ENCODE measurements at regions of chr20 and their contacts with region 1.

Region 1: DNA sequence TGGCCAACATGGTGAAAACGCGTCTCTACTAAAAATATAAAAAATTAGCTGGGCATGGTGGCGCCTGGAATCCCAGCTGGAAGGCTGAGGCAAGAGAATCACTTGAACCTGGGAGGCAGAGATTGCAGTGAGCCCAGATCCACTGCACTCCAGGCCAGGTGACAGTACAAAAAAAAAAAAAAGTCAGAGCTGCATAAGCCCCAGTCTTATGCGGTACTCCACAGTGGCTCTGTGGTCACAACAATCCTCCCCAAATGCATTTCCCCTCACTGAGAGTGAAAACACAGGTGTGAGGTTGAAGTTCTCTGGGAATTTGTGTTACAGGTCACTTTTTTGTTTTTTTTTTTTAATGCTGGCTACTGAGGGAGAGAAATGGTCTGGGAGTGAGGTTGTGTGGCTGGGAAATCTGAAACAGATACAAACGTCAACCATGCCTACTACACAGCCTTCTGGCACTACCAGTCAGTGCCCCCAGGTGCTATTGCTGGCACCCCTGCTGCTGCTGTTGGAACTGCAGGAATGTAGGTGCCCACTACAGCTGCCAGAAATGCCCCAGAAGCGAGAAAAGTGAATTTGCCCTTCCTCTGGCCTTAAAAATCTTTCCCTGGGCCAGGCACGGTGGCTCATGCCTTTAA is 5.7 kb downstream of the MRPS26 start:
- DNase-seq: no peak
- H3K4me3 Mint-ChIP-seq: no peak overlapping the region
- H3K27ac Mint-ChIP-seq: no peak overlapping the region
- H3K4me1 Mint-ChIP-seq: peaks cover 16% of the 10 kb centered on the region
- H3K27me3 Mint-ChIP-seq: no peaks in the 10 kb centered on the region

Region 2: GRCh38 chr20:2508631-2509467 is 542.7 kb before region 1 on chr20 and contains the start of gene ZNF343:
- CTCF ChIA-PET with region 1: no interaction called
- intact Hi-C with region 1: no loop called
- DNase-seq: peak; percentile 85
- H3K4me3 Mint-ChIP-seq: peak within 1 kb of the TSS; percentile 99
- H3K27ac Mint-ChIP-seq: peak within 1 kb of the TSS; percentile 90
- H3K4me1 Mint-ChIP-seq: peaks cover 21% of the 10 kb centered on the region
- H3K27me3 Mint-ChIP-seq: peaks cover 3% of the 10 kb centered on the region
- total RNA-seq, gene ZNF343: 5.3 to 5.7 TPM

Region 3: GRCh38 chr20:3068986-3069900 is 17.7 kb after region 1 on chr20:
- CTCF ChIA-PET with region 1: interaction called, 24 read pairs
- intact Hi-C with region 1: no loop called
- DNase-seq: peak; percentile 62
- H3K4me3 Mint-ChIP-seq: no peak overlapping the region
- H3K27ac Mint-ChIP-seq: no peak overlapping the region
- H3K4me1 Mint-ChIP-seq: peaks cover 19% of the 10 kb centered on the region
- H3K27me3 Mint-ChIP-seq: no peaks in the 10 kb centered on the region

Region 4: GRCh38 chr20:3077618-3078134 is 26.2 kb after region 1 on chr20:
- CTCF ChIA-PET with region 1: interaction called, 17 read pairs
- intact Hi-C with region 1: loop called (anchors 1 kb)
- DNase-seq: peak; percentile 49
- H3K4me3 Mint-ChIP-seq: peak overlapping the region; percentile 50
- H3K27ac Mint-ChIP-seq: no peak overlapping the region
- H3K4me1 Mint-ChIP-seq: peaks cover 26% of the 10 kb centered on the region
- H3K27me3 Mint-ChIP-seq: peaks cover 17% of the 10 kb centered on the region

Region 5: DNA sequence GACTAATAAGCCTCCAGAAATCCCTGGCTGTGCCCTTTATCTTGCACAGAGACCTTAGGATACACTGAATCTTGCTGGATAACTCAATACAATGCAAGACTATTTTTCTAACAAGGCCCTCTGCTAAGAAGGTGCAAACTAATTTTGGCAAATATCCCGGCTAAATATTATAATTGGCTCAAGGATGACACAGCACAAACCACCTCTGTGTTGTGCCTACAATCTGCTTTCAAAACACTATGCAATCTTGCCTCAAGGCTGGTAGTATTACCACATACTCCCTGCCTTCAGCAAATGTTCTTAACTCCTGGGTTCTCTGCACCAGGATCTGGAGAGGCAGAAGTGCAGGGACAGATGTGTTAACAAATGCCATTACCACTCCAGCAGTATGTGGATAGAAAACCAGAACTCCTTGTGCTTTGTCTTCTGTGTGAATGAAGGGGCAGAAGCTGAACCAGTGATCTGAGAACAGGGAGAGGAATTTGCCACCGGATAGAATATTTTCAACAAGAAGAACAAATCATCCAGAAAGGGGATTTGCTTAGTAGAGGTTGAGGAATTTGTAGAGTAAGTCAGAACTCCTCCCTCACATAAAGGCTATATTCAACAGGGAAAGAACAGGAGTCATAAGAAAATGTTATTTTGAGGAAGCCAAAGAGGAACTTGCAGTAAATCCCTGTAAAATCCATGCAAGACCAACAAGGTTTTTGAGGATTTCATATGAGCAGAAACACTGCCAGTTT is 261.6 kb after region 1 on chr20:
- CTCF ChIA-PET with region 1: interaction called, 14 read pairs
- intact Hi-C with region 1: loop called (anchors 1 kb)
- DNase-seq: no peak
- H3K4me3 Mint-ChIP-seq: no peak overlapping the region
- H3K27ac Mint-ChIP-seq: no peak overlapping the region
- H3K4me1 Mint-ChIP-seq: no peaks in the 10 kb centered on the region
- H3K27me3 Mint-ChIP-seq: no peaks in the 10 kb centered on the region

Measured in activated naive CD4-positive, alpha-beta T cell treated with anti-CD3 and anti-CD28 coated beads for 36 hours (primary cell).